ENCODE measurements at regions of chr12 and their contacts with region 1.

Region 1: DNA sequence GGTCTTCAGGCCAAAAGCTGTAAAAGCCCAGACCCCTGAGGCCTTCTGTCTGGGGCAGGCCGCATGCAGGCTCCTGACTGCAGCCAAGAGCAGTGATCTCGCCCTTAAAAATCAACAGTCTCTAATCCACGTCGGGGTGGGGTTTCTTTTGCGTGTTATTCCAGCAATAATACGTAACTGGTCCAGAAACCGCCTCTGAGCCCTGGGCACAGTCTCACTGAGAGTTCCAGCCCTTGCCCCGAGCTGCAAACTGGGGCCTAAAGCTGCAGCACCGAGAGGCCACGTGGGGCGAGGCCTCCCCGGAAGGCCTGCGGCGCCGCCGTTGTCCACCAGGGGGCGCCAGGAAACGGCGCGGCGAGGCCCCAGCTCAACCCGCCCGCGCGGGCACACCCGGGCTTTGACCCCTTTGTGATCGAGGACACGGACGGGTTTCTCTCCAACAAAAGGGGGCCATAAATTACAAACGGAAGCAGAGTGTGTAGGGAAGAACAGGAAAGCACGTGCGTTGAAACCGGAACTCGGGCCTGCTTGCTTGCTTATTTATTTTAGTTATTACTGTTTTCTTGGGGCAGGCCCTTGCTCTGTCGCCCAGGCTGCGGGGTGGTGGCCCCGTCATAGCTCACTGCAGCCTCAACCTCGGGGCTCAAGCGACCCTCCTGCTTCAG is 87.2 kb downstream of the NINJ2 start:
- DNase-seq: peak; percentile 80
- H3K4me3 Mint-ChIP-seq: no peak overlapping the region
- H3K27ac Mint-ChIP-seq: peak overlapping the region; percentile 80
- H3K4me1 Mint-ChIP-seq: peaks cover 48% of the 10 kb centered on the region
- H3K27me3 Mint-ChIP-seq: no peaks in the 10 kb centered on the region

Region 2: GRCh38 chr12:442235-442884 is 133.7 kb before region 1 on chr12:
- CTCF ChIA-PET with region 1: no interaction called
- POLR2A ChIA-PET with region 1: no interaction called
- DNase-seq: peak; percentile 55
- H3K4me3 Mint-ChIP-seq: no peak overlapping the region
- H3K27ac Mint-ChIP-seq: no peak overlapping the region
- H3K4me1 Mint-ChIP-seq: no peaks in the 10 kb centered on the region
- H3K27me3 Mint-ChIP-seq: no peaks in the 10 kb centered on the region

Region 3: GRCh38 chr12:541676-542324 is 34.3 kb before region 1 on chr12:
- CTCF ChIA-PET with region 1: no interaction called
- POLR2A ChIA-PET with region 1: no interaction called
- DNase-seq: no peak
- H3K4me3 Mint-ChIP-seq: no peak overlapping the region
- H3K27ac Mint-ChIP-seq: peak overlapping the region; percentile 2
- H3K4me1 Mint-ChIP-seq: peaks cover 28% of the 10 kb centered on the region
- H3K27me3 Mint-ChIP-seq: peaks cover 9% of the 10 kb centered on the region

Region 4: DNA sequence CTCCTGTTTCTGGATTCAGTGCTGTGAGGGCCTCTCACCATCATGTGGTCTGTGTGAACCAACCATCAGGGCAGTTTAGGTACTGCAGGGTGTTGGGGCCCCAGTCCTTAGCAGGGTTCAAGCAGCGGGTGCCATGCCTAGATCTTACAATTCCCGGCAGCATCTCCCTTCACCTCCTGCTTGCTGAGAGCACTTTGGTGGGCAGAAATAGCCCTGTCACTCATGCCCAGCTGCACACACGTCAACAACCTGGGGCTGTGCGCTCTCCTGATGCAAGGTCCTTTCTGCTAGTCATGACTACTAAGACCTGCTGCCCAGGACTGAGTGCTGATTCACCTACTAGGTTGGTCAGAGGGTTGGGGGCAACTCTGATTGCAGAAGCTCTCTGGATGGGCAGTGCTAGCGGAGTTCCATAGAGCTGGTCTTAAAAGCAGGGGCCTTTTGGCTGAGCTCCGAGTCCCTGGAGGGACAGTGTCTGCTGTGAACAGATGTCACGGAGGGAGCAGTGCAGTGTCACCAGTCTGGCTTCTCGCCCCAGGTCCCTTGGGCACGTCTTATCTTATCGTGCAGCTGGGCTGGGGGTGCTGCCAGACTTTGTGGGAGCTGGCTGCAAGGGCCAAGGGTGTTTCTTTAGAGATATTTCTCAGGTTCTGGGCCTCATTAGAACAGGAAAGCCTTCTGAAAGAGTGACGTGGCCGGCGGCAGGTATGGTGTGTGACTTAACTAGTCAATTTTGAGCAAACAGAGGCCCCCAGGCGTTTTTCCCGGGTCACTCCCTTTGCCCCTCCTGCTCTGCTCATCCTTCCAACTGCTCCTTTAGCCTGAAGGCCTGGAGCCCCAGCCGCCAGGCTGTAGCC is 15.3 kb after region 1 on chr12:
- CTCF ChIA-PET with region 1: interaction called, 13 read pairs
- POLR2A ChIA-PET with region 1: no interaction called
- DNase-seq: no peak
- H3K4me3 Mint-ChIP-seq: no peak overlapping the region
- H3K27ac Mint-ChIP-seq: no peak overlapping the region
- H3K4me1 Mint-ChIP-seq: peaks cover 3% of the 10 kb centered on the region
- H3K27me3 Mint-ChIP-seq: peaks cover 17% of the 10 kb centered on the region

Region 5: GRCh38 chr12:607526-608001 is 31.5 kb after region 1 on chr12:
- CTCF ChIA-PET with region 1: interaction called, 10 read pairs
- POLR2A ChIA-PET with region 1: interaction called, 4 read pairs
- DNase-seq: peak; percentile 19
- H3K4me3 Mint-ChIP-seq: no peak overlapping the region
- H3K27ac Mint-ChIP-seq: no peak overlapping the region
- H3K4me1 Mint-ChIP-seq: peaks cover 40% of the 10 kb centered on the region
- H3K27me3 Mint-ChIP-seq: no peaks in the 10 kb centered on the region

Region 6: GRCh38 chr12:614411-614970 is 38.4 kb after region 1 on chr12:
- CTCF ChIA-PET with region 1: interaction called, 13 read pairs
- POLR2A ChIA-PET with region 1: interaction called, 4 read pairs
- DNase-seq: peak; percentile 32
- H3K4me3 Mint-ChIP-seq: no peak overlapping the region
- H3K27ac Mint-ChIP-seq: no peak overlapping the region
- H3K4me1 Mint-ChIP-seq: peaks cover 50% of the 10 kb centered on the region
- H3K27me3 Mint-ChIP-seq: no peaks in the 10 kb centered on the region

Region 7: DNA sequence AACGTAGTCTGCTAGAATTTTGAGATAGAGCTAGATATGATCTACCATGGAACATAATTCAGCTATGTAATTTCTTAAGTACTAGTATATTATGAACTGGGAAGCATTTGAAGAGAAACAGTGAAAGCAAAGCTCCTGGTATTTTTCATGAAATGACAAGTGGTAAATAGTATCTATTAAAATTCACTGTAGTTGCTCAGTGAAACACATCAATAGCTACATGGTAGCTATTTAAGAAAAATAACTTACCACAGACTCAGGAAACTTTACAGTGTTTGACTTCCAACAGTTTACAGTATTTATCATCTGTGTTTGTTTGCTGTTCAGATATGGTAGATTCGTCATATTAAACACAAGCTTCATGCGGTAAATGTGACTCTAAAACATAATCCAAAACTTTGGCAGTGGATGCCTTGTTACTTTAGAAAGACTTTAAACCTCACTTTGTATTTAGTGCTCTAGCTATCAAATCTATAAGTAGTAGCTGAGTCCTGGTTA is 201.5 kb after region 1 on chr12:
- CTCF ChIA-PET with region 1: interaction called, 12 read pairs
- POLR2A ChIA-PET with region 1: no interaction called
- DNase-seq: no peak
- H3K4me3 Mint-ChIP-seq: no peak overlapping the region
- H3K27ac Mint-ChIP-seq: no peak overlapping the region
- H3K4me1 Mint-ChIP-seq: peaks cover 71% of the 10 kb centered on the region
- H3K27me3 Mint-ChIP-seq: no peaks in the 10 kb centered on the region

Region 8: GRCh38 chr12:812950-813349 is 236.9 kb after region 1 on chr12:
- CTCF ChIA-PET with region 1: interaction called, 20 read pairs
- POLR2A ChIA-PET with region 1: no interaction called
- DNase-seq: no peak
- H3K4me3 Mint-ChIP-seq: no peak overlapping the region
- H3K27ac Mint-ChIP-seq: no peak overlapping the region
- H3K4me1 Mint-ChIP-seq: peaks cover 58% of the 10 kb centered on the region
- H3K27me3 Mint-ChIP-seq: no peaks in the 10 kb centered on the region

Measured in activated CD4-positive, alpha-beta T cell treated with anti-CD3 and anti-CD28 coated beads, Interleukin-2, amount 10 ng/mL, durations not matched to agents 7 days and 5 days (primary cell).